ENCODE measurements at regions of chr16 and their contacts with region 1.

Region 1: GRCh38 chr16:2919511-2920255 is 8.0 kb downstream of the FLYWCH1 start:
- DNase-seq: peak; percentile 70
- H3K4me3 Mint-ChIP-seq: no peak overlapping the region
- H3K27ac Mint-ChIP-seq: no peak overlapping the region
- H3K4me1 Mint-ChIP-seq: peaks cover 15% of the 10 kb centered on the region
- H3K27me3 Mint-ChIP-seq: no peaks in the 10 kb centered on the region

Region 2: DNA sequence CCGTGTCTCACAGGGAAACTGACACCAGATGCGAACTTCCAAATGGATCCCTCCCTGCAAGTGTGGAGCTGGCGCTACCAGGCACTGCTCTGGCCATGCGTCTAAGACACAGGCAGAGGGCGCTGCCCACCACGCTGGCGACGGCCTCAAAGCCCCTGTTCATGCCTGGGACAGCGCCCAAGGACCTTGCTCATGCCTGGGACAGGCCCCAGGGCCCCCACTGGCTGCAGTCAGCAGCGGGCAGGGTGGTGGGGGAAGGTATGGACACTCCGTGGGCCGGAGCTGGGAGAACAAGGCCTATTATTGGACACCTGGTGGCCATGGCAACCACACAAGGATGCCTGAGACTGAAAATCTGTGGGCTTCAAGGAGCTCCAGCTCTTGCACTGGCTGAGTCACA is 80.8 kb before region 1 on chr16:
- CTCF ChIA-PET with region 1: interaction called, 14 read pairs
- POLR2A ChIA-PET with region 1: no interaction called
- intact Hi-C with region 1: no loop called
- DNase-seq: peak; percentile 72
- H3K4me3 Mint-ChIP-seq: no peak overlapping the region
- H3K27ac Mint-ChIP-seq: no peak overlapping the region
- H3K4me1 Mint-ChIP-seq: peaks cover 35% of the 10 kb centered on the region
- H3K27me3 Mint-ChIP-seq: peaks cover 1% of the 10 kb centered on the region

Region 3: DNA sequence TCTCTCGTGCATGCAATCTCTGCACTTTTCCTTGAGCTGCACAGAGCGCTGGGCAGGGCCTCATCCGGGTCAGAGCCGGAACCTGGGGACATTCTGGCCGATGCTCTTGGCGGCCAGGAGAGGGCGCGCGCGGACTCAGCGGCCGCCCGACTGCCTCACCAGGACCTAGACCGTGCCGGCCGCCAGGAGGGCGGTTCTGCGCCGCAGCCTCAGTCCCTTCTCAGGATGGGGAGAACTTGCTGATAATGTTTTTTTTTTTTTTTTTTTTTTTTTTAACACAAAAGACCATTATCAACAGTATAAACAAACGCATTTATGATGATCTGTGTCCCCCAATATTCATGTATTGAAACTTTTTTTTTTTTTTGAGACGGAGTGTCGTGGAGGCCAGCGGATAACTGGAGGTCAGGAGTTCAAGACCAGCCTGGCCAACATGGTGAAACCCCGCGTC is 44.7 kb before region 1 on chr16:
- CTCF ChIA-PET with region 1: interaction called, 10 read pairs
- POLR2A ChIA-PET with region 1: no interaction called
- intact Hi-C with region 1: loop called (anchors 5 kb)
- DNase-seq: peak; percentile 80
- H3K4me3 Mint-ChIP-seq: no peak overlapping the region
- H3K27ac Mint-ChIP-seq: no peak overlapping the region
- H3K4me1 Mint-ChIP-seq: no peaks in the 10 kb centered on the region
- H3K27me3 Mint-ChIP-seq: no peaks in the 10 kb centered on the region

Region 4: DNA sequence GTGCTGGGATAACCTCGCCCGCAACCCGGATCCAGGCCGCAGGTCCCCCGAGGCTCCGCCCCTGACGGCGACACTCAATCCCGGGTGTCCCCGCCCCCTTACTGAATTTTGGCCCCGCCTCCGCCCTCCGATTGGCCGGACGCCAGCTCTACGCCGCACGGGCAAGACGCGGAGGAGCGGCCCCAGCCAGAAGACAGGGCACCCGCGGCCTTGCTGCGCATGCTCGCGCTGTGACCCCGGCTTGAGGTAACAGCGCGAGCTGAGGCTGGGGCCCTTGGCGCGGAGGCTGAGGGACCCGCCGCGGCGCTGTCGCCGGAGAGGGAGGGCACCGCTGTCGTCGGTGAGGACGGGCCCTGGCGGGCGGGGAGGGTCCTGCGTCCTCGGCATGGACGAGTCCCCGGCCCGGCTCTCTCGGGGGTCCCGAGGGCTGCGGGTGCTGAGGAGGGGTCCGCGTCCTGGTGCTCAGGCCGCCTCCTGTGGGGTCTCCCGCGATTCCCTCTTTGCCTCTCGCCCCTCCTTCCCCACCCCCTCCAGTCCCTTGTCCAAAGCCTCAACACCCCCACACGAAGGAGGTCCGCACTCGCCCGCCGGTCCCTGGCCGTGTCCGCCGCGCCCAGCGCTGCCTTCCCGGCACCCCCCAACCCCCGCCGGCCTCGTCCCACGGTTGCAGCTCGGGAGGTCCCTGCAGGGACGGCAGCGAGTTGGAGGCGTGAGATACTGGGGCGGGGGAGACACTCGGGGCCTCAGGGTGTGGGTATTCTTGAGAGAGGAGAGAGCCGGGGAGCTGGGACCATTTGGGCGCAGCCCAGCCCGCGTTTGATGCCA is 36.4 kb before region 1 on chr16 and contains the start of gene FLYWCH2:
- CTCF ChIA-PET with region 1: interaction called, 3 read pairs
- POLR2A ChIA-PET with region 1: interaction called, 3 read pairs
- intact Hi-C with region 1: loop called (anchors 5 kb)
- DNase-seq: peak; percentile 100
- H3K4me3 Mint-ChIP-seq: peak within 1 kb of the TSS; percentile 90
- H3K27ac Mint-ChIP-seq: peak within 1 kb of the TSS; percentile 97
- H3K4me1 Mint-ChIP-seq: peaks cover 11% of the 10 kb centered on the region
- H3K27me3 Mint-ChIP-seq: no peaks in the 10 kb centered on the region
- total RNA-seq, gene FLYWCH2: 19.1 to 19.4 TPM

Region 5: GRCh38 chr16:2905431-2906387 is 14.0 kb before region 1 on chr16:
- CTCF ChIA-PET with region 1: interaction called, 14 read pairs
- POLR2A ChIA-PET with region 1: no interaction called
- intact Hi-C with region 1: loop called (anchors 2 kb)
- DNase-seq: peak; percentile 99
- H3K4me3 Mint-ChIP-seq: peak overlapping the region; percentile 97
- H3K27ac Mint-ChIP-seq: peak overlapping the region; percentile 51
- H3K4me1 Mint-ChIP-seq: peaks cover 16% of the 10 kb centered on the region
- H3K27me3 Mint-ChIP-seq: no peaks in the 10 kb centered on the region